Panc1 (cell line): ENCODE measurements at regions of chr6 and their contacts with region 1.

Region 1: DNA sequence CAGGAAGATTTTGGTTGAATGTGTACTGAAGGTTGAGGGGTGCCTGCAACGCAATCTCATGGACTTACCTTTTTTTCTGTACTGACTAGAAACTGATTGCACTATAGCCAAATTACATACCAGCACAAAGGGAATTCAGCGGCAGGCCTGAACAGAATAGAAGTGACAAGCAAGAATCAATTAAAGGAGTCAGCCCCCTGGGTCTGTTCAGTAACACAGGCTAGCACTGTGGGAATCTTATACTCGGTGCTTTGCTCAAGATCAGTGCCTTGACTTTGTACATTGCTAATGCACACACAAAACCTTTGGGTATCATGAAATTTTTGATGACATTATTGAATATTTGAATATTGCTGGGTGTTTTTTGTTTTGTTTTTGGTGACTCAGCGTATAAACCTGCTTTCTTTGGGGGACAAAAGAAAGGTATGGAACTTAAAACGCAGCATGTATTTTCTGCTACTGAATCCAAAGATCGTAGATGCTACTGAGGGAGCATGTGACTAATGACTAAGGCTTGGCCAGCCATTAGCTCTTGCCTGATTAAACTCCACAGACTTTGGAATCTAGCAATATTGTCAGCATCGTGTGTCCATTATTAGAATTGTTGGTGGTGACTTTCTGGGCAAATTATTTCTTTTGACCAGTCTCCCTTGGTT is 236.6 kb downstream of the ARID1B start:
- DNase-seq: no peak
- ATAC-seq: no peak
- H3K4me3 ChIP-seq: no peak overlapping the region
- H3K27ac ChIP-seq: no peak overlapping the region
- H3K4me1 ChIP-seq: peaks cover 17% of the 10 kb centered on the region
- H3K27me3 ChIP-seq: no peaks in the 10 kb centered on the region
- CTCF ChIP-seq: no peak

Region 2: GRCh38 chr6:156980333-156980914 is 33.4 kb before region 1 on chr6:
- CTCF ChIA-PET with region 1: no interaction called
- POLR2A ChIA-PET with region 1: interaction called, 11 read pairs
- in situ Hi-C with region 1: no loop called
- intact Hi-C with region 1: no loop called
- DNase-seq: no peak
- ATAC-seq: peak; percentile 91
- H3K4me3 ChIP-seq: no peak overlapping the region; a peak in 1 of 4 replicates
- H3K27ac ChIP-seq: no peak overlapping the region
- H3K4me1 ChIP-seq: peaks cover 43% of the 10 kb centered on the region
- H3K27me3 ChIP-seq: no peaks in the 10 kb centered on the region
- CTCF ChIP-seq: no peak